ENCODE measurements at regions of chr6 and their contacts with region 1.

Region 1: GRCh38 chr6:71288228-71289001 is at the start of gene OGFRL1:
- DNase-seq: peak; percentile 90
- ATAC-seq: peak; percentile 98
- total RNA-seq, gene OGFRL1: 9.1 TPM

Region 2: GRCh38 chr6:71250099-71250606 is 38.3 kb before region 1 on chr6:
- intact Hi-C with region 1: loop called (anchors 1 kb)
- DNase-seq: no peak
- ATAC-seq: peak; percentile 86

Region 3: DNA sequence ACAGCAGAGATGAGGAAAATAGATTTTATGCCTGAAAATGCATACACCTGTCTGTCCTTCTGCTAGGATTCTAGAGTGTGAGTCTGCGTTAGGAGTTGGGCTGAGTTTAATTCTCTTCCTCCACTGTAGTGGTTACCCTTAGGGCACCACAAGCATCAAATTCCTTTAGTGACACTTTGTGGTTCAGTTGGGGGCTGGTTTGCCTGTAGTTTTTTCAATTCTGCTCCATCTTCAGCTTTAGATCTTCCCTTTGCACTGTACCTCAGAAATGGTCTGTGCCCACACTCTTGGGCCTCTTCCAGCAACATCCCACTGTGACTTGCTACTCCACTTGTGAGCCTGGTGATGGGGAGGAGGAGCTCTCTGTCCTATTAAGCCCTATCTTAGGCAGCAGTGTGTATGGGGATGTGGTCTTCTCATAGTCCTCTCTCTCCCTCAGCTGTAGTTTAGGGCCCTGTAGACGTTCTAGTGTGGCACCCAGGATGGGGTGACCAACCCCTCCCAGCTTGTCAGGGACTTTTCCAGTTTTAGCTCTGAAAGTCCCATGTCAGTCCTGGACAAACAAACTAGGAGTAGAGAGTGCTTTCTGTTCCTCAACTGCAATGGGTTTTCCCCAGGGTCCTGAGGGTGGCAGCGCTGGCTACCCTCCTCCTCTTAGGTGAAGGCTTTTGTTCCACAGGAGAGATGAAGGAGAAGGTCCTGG is 19.5 kb before region 1 on chr6:
- intact Hi-C with region 1: no loop called
- DNase-seq: no peak
- ATAC-seq: no peak

Region 4: DNA sequence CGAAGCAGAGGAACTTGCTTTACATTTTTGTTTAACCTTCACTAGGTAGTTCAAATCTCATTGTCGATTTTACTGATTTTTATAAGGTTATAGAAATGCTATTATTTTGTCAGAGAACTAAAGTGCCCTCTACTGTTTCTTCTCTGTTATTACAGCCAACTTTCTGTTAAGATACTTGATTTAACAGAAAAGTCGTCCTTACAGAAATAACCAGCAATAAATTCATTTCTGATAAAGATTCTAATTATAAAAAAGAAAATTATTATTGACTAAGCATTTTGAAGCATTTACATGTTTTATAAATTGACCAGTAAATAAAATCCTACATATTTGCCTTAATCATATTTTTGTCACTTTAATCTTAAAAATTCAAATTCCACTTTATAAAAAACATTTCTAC is 61.0 kb after region 1 on chr6:
- intact Hi-C with region 1: loop called (anchors 5 kb)
- DNase-seq: no peak
- ATAC-seq: no peak

Measured in Right ventricle myocardium inferior (tissue), 1 donor.